ENCODE measurements at regions of chr2 and their contacts with region 1.

Region 1: DNA sequence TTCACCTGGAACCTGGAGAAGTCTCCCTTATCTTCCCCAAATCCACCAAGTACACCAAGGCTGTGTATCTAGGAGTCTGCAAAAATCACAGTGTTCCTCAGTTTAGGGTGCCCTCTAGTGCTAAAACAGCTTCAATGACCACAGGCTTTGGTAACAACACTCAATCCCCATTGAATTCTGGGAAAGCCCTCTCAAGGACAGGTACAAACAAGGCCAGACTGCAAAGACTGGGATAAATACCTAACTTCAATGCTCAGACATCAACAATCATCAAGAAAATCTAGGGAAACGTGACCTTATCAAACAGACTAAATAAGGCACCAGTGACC is 149.0 kb upstream of the SRD5A2 start:
- DNase-seq: peak; percentile 69
- H3K4me3 ChIP-seq: no peak overlapping the region
- H3K27ac ChIP-seq: no peak overlapping the region
- H3K4me1 ChIP-seq: no peaks in the 10 kb centered on the region
- H3K27me3 ChIP-seq: peaks cover 3% of the 10 kb centered on the region; the same call in 1 of the 2 replicates

Region 2: GRCh38 chr2:31333527-31334183 is 396.1 kb before region 1 on chr2:
- in situ Hi-C with region 1: loop called (anchors 25 kb)
- DNase-seq: peak; percentile 84
- H3K4me3 ChIP-seq: no peak overlapping the region
- H3K27ac ChIP-seq: peak overlapping the region; percentile 79
- H3K4me1 ChIP-seq: peaks cover 48% of the 10 kb centered on the region
- H3K27me3 ChIP-seq: no peaks in the 10 kb centered on the region

Region 3: GRCh38 chr2:33013684-33014110 is 1284.0 kb after region 1 on chr2:
- in situ Hi-C with region 1: no loop called
- DNase-seq: peak; percentile 45
- H3K4me3 ChIP-seq: no peak overlapping the region
- H3K27ac ChIP-seq: no peak overlapping the region
- H3K4me1 ChIP-seq: peaks cover 30% of the 10 kb centered on the region; the same call in 1 of the 2 replicates
- H3K27me3 ChIP-seq: no peaks in the 10 kb centered on the region

Measured in GM23248 (cell line).